ENCODE measurements at regions of chrX and their contacts with region 1.

Region 1: GRCh38 chrX:78754917-78755316 is 7.4 kb downstream of the LPAR4 start:
- DNase-seq: peak; percentile 49
- ATAC-seq: peak; percentile 94
- H3K4me3 ChIP-seq: no peak overlapping the region
- H3K27ac ChIP-seq: no peak overlapping the region
- H3K4me1 ChIP-seq: peaks cover 20% of the 10 kb centered on the region
- H3K27me3 ChIP-seq: no peaks in the 10 kb centered on the region
- CTCF ChIP-seq: peak; percentile 15 to 44 (median 32); a peak in 4 of 6 replicates
- EP300 ChIP-seq: no peak
- POLR2A ChIP-seq: no peak
- RAD21 ChIP-seq: peak; percentile 79

Region 2: DNA sequence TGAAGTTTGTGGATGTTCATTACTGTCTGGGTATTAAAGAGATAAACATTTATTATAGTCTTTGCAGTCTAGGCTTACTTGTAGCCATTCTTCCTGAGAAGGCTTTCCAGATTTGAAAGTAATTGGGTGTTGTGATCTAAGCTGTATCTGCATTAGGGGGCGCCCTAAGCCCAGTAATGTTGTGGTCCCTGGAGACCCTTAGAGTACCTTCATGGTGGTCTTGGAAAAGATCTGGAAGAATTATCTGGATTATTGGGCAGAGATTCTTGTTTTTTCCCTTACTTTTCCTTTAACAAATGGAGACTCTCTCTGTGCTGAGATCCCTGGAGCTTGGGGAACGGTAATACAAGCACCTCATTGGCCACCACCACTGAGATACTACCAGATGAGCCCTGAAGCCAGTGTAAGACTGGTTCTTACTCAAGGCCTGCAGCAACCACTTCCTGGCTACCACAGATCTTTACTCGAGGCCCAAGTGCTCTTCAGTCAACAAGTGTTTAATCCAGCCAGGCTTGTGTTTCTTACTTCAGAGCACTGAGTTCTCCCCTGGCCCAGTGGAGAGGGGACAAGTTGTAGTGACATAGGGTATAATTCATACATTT is 158.9 kb before region 1 on chrX:
- CTCF ChIA-PET with region 1: interaction called, 12 read pairs
- POLR2A ChIA-PET with region 1: no interaction called
- RAD21 ChIA-PET with region 1: interaction called, 5 read pairs
- SMC1A ChIA-PET with region 1: no interaction called
- in situ Hi-C with region 1: no loop called
- intact Hi-C with region 1: loop called (anchors 5 kb)
- DNase-seq: no peak
- ATAC-seq: peak; percentile 45; the same call in 2 of the 3 replicates
- H3K4me3 ChIP-seq: no peak overlapping the region
- H3K27ac ChIP-seq: no peak overlapping the region
- H3K4me1 ChIP-seq: no peaks in the 10 kb centered on the region
- H3K27me3 ChIP-seq: no peaks in the 10 kb centered on the region
- CTCF ChIP-seq: peak in 1 of 3 experiments; percentile 18; a peak in 1 of 6 replicates
- EP300 ChIP-seq: no peak
- POLR2A ChIP-seq: no peak
- RAD21 ChIP-seq: peak; percentile 58

Region 3: DNA sequence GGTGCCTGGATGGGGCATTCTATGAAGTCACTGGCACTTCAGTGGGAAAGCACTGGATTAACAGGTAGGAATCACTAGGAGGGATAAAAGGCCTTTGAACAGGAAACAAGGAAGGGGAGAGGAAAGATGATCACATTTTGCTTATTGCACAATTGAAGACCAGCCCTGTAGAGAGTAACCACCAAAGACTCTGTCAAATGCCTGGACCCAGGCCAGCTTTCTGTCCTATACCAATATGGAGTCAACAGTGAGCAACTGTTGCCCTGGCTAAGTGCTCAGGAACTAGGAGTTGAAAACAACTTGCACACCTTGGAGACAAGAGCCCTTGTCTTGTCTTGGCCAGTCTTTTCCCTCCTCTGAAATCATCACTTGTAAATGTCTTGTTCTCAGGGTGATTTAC is 81.7 kb before region 1 on chrX:
- CTCF ChIA-PET with region 1: no interaction called
- POLR2A ChIA-PET with region 1: no interaction called
- RAD21 ChIA-PET with region 1: no interaction called
- SMC1A ChIA-PET with region 1: no interaction called
- in situ Hi-C with region 1: no loop called
- intact Hi-C with region 1: no loop called
- DNase-seq: no peak
- ATAC-seq: no peak
- H3K4me3 ChIP-seq: no peak overlapping the region
- H3K27ac ChIP-seq: no peak overlapping the region
- H3K4me1 ChIP-seq: no peaks in the 10 kb centered on the region
- H3K27me3 ChIP-seq: no peaks in the 10 kb centered on the region
- CTCF ChIP-seq: no peak
- EP300 ChIP-seq: no peak
- POLR2A ChIP-seq: no peak
- RAD21 ChIP-seq: no peak

Region 4: DNA sequence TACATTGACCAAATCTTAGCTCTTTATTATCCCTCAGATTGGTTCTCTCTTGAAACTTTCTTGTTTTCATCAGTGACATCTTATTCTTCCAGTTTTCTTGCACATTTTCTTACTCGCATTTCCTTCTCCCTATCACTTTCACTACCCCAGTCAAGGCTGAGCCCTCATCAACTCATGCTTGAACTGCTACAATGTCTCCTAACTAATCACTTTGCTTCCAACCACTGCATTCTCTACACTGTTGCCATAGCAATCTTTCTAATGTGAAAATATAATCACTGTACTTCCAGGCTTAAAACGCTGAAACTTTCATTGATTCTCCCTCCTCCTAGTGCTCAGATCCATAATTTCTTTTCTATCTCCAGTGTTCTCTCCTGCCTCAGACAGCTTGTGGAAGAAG is 29.6 kb before region 1 on chrX:
- CTCF ChIA-PET with region 1: no interaction called
- POLR2A ChIA-PET with region 1: no interaction called
- RAD21 ChIA-PET with region 1: no interaction called
- SMC1A ChIA-PET with region 1: no interaction called
- in situ Hi-C with region 1: no loop called
- intact Hi-C with region 1: no loop called
- DNase-seq: no peak
- ATAC-seq: no peak
- H3K4me3 ChIP-seq: no peak overlapping the region
- H3K27ac ChIP-seq: no peak overlapping the region
- H3K4me1 ChIP-seq: no peaks in the 10 kb centered on the region
- H3K27me3 ChIP-seq: no peaks in the 10 kb centered on the region
- CTCF ChIP-seq: no peak
- EP300 ChIP-seq: no peak
- POLR2A ChIP-seq: no peak
- RAD21 ChIP-seq: no peak

Region 5: DNA sequence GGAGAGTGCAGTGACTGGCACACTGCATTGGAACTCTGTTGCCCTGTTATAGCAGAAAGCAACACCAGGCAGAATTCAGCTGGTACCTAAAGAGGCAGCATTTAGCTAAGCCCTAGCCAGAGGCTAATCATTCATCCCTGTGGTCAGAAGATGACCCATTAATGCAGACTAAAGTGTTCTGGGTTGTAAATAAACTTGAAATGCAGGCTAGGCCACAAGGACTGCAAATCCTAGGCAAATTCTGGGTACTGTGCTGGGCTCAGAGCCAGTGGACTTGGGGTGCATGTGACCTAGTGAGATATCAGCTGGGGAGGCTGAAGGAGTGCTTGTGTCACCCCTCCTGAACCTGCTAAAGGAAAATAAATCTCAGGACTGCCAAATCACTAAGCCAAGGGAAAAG is 83.8 kb after region 1 on chrX:
- CTCF ChIA-PET with region 1: no interaction called
- POLR2A ChIA-PET with region 1: no interaction called
- RAD21 ChIA-PET with region 1: no interaction called
- SMC1A ChIA-PET with region 1: no interaction called
- in situ Hi-C with region 1: no loop called
- intact Hi-C with region 1: no loop called
- DNase-seq: no peak
- ATAC-seq: no peak
- H3K4me3 ChIP-seq: no peak overlapping the region
- H3K27ac ChIP-seq: no peak overlapping the region
- H3K4me1 ChIP-seq: no peaks in the 10 kb centered on the region
- H3K27me3 ChIP-seq: no peaks in the 10 kb centered on the region
- CTCF ChIP-seq: no peak
- EP300 ChIP-seq: no peak
- POLR2A ChIP-seq: no peak
- RAD21 ChIP-seq: no peak